Psoas muscle (tissue), 8 donors: ENCODE measurements at regions of chr11 and their contacts with region 1.

Region 1: DNA sequence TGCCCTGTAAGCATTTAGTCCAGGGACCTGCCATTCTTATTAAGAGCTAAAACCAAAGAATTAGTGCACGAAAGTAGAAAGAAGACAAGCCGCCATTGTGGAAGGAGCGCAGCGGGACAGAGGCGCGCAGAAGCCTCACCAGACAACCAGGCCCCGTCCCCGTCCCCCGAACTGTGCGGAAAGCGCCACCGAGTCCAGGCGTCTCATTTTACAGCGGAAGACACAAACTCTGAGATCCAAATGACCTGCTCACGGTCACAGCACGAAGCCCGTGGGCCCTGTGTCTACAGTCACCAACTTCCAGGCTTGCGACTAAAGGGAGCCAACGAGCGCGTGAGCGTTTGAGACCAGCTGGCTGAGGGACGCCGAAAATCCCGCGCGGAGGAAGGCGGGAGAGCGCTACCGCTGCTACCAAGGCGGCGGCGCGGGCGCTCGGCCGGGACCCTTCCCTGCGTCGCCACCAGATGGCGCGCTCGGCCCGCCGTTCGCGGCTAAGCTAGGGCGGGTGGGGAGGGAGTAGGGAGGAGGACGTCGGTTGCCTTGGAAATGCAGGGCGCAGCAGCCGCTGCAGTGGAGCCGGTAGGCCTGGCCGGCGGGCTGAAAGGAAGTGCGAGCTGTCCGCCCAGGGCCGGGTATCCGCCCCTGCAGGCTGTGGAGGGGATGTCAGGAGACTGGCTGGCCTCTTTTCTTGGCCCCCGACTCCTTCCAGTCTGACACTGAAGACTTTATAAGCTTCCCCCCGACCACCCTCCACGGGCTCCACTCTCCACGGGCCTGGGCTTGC is 434 bp upstream of the CCDC83 start:
- DNase-seq: peak; percentile 91 to 94
- ATAC-seq: peak; percentile 98 to 99 (median 99)
- H3K4me3 ChIP-seq: peak overlapping the region; percentile 72
- H3K27ac ChIP-seq: peak overlapping the region; percentile 94
- H3K4me1 ChIP-seq: no peaks in the 10 kb centered on the region
- H3K27me3 ChIP-seq: no peaks in the 10 kb centered on the region
- CTCF ChIP-seq: peak; percentile 96

Region 2: GRCh38 chr11:85407648-85408047 is 447.1 kb before region 1 on chr11:
- intact Hi-C with region 1: no loop called
- DNase-seq: no peak
- ATAC-seq: no peak
- H3K4me3 ChIP-seq: no peak overlapping the region
- H3K27ac ChIP-seq: no peak overlapping the region
- H3K4me1 ChIP-seq: no peaks in the 10 kb centered on the region
- H3K27me3 ChIP-seq: no peaks in the 10 kb centered on the region
- CTCF ChIP-seq: no peak

Region 3: DNA sequence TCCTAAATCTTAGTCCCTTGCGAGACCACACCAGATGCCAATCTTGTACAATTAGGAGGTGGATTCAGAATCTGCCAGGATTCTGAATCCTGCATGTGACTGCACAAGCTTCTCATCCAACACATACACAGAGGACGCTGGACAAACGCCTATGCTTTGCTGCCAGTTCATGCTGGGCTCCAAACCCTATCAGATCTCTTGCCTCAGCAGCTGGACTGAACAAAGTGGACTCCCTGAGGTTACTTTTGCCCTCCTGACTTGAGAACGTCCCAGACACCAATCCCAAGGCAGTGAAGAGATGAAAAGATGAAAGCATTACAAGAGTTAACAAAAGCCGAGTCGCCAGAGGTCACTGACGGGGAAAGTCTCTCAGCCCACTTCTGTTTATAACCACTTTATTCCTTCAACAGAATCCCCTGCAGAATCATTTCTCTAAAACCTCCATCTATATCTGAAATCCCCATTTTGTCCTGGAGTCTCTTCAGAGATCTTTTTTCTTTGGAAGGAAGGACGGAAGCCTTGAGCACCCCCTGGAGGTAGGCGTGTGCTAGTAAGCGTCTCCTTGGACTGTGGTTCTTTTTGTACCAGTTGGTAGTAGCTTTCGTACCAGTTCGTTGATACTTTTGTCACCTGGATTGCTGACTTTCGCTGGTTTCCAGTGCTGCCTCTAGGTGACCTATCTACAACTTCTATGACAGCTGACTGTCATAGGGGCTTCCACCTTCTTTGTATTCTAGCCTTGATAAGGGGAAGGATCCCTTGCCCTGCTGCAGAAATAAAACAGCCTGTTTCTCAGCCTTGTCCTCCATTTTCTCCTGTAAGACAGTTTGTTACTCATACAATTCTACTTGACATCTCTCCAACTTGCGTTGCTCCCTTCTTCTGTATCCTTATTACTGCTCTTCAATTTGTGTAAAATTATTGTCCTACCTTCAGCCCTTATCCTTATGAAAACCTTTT is 363.7 kb after region 1 on chr11:
- intact Hi-C with region 1: loop called (anchors 5 kb)
- DNase-seq: peak; percentile 56 to 76
- ATAC-seq: peak; percentile 84 to 99 (median 94)
- H3K4me3 ChIP-seq: peak overlapping the region; percentile 40
- H3K27ac ChIP-seq: no peak overlapping the region
- H3K4me1 ChIP-seq: no peaks in the 10 kb centered on the region
- H3K27me3 ChIP-seq: no peaks in the 10 kb centered on the region
- CTCF ChIP-seq: peak; percentile 94

Region 4: DNA sequence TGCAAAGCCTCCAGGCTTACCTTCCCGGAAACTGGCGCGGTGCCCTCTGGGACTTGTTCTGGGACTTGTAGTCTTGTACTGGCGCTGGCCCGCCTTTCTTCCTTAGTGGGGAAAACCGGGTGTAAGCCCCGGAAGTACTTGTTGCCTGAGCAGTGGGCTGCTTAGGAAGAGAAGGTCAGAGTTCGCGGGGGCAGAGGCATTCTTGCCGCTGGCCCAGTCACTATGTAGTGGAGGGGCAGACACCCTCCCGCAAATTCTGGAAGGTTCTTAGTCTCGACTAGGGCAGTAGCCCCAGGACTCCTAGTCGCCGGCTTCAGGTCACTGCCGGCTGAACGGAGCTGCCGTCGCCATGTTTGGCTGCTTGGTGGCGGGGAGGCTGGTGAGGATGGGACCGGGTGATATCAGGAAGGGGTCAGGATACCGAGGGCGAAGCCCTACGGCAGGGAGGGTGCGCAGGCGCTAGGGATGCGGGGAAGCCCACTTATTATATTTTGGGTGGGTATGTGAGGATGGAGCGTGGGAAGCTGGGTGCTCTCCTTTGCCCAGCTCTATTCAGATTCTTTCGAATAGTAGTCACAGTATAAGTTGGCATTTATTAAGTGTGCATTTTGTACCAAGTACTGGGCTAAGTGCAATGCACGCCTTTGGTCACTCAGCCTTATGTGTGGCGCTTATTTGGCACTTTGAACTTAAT is 447.5 kb after region 1 on chr11 and contains the start of gene HIKESHI:
- intact Hi-C with region 1: loop called in 1 of 2 experiments (anchors 5 kb)
- DNase-seq: peak; percentile 100
- ATAC-seq: peak; percentile 97 to 99 (median 98)
- H3K4me3 ChIP-seq: peak within 1 kb of the TSS; percentile 89
- H3K27ac ChIP-seq: peak within 1 kb of the TSS; percentile 93
- H3K4me1 ChIP-seq: peaks cover 18% of the 10 kb centered on the region
- H3K27me3 ChIP-seq: no peaks in the 10 kb centered on the region
- CTCF ChIP-seq: no peak
- total RNA-seq, gene HIKESHI: 39.6 to 45.7 (median 41.4) TPM